PC-3 (cell line): ENCODE measurements at regions of chr6 and their contacts with region 1.

Region 1: GRCh38 chr6:42118162-42119001 is 24.0 kb downstream of the C6orf132 start:
- DNase-seq: peak; percentile 90
- ATAC-seq: peak; percentile 81
- H3K4me3 ChIP-seq: no peak overlapping the region
- H3K27ac ChIP-seq: peak overlapping the region; percentile 76
- H3K4me1 ChIP-seq: peaks cover 64% of the 10 kb centered on the region
- H3K27me3 ChIP-seq: no peaks in the 10 kb centered on the region
- CTCF ChIP-seq: no peak

Region 2: DNA sequence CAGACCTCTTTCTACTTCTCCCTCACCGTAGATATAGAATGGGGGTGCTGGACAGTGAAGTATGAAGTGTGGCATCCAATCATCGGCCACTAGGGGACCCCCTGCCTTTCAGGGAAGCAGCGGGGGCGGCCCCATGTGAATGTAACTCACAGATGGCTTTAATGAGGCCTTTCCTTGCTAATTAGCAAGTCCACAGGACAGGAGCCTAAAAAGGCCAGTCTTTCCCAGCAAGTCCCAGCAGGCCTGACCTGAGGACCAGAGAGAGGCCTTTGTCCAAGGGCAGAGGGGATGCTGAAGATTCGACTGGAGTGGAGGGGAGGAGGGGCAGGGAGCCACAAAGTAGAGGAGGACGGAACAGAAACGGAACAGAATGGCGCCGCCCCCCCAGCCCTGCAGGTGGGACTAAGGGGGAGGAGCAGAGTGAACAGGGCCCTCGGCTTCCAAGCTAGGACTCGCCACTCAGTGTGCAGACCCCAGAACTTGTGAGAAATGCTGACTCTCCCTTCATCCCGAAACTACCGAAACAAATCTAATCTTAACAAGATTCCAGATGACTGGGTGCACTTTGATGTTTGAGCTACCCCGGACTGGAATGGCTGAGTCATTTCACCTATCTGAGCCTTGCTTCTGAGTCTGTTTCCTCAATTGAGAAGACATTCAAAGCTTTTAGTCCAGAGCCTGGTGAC is 18.3 kb after region 1 on chr6:
- CTCF ChIA-PET with region 1: interaction called, 12 read pairs
- POLR2A ChIA-PET with region 1: interaction called, 26 read pairs
- intact Hi-C with region 1: loop called (anchors 2 kb)
- DNase-seq: peak; percentile 85
- ATAC-seq: peak; percentile 36
- H3K4me3 ChIP-seq: peak overlapping the region; percentile 51
- H3K27ac ChIP-seq: peak overlapping the region; percentile 91
- H3K4me1 ChIP-seq: peaks cover 59% of the 10 kb centered on the region
- H3K27me3 ChIP-seq: no peaks in the 10 kb centered on the region
- CTCF ChIP-seq: no peak; the same call in 1 of the 2 replicates

Region 3: DNA sequence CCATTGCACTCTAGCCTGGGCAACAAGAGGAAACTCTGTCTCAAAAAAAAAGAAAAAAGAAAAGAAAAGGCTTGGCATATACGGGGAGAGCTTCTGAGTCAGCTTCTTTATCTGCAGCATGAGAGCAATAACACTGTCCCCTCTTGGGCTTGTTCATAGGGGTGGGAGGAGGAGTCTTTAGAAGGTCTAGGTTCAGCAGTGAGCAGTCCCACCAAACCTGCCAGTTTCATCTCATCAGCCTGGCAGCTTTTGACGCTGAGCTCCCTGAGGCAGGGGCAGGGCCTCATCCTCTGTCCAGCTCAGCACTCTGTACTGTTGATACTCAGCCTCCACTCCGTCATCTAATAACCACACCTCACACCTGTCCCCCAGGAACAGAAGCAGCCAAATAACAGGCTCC is 29.7 kb after region 1 on chr6:
- CTCF ChIA-PET with region 1: no interaction called
- POLR2A ChIA-PET with region 1: interaction called, 45 read pairs
- intact Hi-C with region 1: no loop called
- DNase-seq: peak; percentile 27
- ATAC-seq: no peak
- H3K4me3 ChIP-seq: no peak overlapping the region
- H3K27ac ChIP-seq: no peak overlapping the region
- H3K4me1 ChIP-seq: peaks cover 15% of the 10 kb centered on the region
- H3K27me3 ChIP-seq: no peaks in the 10 kb centered on the region
- CTCF ChIP-seq: no peak

Region 4: GRCh38 chr6:42224222-42224989 is 106.0 kb after region 1 on chr6:
- CTCF ChIA-PET with region 1: interaction called, 15 read pairs
- POLR2A ChIA-PET with region 1: interaction called, 15 read pairs
- intact Hi-C with region 1: no loop called
- DNase-seq: peak; percentile 99
- ATAC-seq: peak; percentile 39
- H3K4me3 ChIP-seq: peak overlapping the region; percentile 60
- H3K27ac ChIP-seq: peak overlapping the region; percentile 98
- H3K4me1 ChIP-seq: peaks cover 91% of the 10 kb centered on the region
- H3K27me3 ChIP-seq: no peaks in the 10 kb centered on the region
- CTCF ChIP-seq: no peak

Region 5: DNA sequence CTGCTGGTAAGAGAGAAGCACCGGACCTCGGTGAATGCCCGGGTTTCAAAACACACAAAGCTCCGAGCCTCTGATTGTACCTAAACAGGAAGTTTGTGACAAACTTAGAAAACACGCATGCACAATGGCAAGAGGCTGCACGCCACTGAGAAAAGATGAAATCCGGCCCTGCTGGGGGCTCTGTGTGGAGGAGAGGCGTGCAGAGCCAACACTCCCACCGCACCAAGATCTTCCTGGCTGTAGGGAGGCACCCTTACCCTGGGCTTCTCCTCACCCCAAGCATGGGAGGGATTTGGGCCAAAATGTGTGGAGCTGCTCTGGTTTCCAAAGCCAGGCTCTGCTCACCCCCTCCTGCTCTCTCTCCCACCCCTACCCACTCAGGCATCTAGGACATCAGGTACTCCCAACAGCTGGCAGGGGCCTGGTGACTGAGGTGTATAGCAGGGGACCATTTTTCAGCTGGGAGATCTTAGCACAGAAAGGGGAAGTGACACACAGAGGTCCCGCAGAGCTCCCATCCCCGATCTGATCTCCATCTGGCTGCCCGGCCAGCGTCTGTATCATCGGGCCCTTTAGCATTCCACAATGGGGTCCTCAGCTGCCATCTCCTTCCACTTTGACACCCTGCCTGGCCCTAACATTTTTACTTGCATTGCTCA is 249.1 kb after region 1 on chr6:
- CTCF ChIA-PET with region 1: no interaction called
- POLR2A ChIA-PET with region 1: no interaction called
- intact Hi-C with region 1: no loop called
- DNase-seq: no peak
- ATAC-seq: no peak
- H3K4me3 ChIP-seq: no peak overlapping the region
- H3K27ac ChIP-seq: no peak overlapping the region
- H3K4me1 ChIP-seq: peaks cover 8% of the 10 kb centered on the region
- H3K27me3 ChIP-seq: no peaks in the 10 kb centered on the region
- CTCF ChIP-seq: no peak